GM12878 (cell line): ENCODE measurements at regions of chr12 and their contacts with region 1.

Region 1: DNA sequence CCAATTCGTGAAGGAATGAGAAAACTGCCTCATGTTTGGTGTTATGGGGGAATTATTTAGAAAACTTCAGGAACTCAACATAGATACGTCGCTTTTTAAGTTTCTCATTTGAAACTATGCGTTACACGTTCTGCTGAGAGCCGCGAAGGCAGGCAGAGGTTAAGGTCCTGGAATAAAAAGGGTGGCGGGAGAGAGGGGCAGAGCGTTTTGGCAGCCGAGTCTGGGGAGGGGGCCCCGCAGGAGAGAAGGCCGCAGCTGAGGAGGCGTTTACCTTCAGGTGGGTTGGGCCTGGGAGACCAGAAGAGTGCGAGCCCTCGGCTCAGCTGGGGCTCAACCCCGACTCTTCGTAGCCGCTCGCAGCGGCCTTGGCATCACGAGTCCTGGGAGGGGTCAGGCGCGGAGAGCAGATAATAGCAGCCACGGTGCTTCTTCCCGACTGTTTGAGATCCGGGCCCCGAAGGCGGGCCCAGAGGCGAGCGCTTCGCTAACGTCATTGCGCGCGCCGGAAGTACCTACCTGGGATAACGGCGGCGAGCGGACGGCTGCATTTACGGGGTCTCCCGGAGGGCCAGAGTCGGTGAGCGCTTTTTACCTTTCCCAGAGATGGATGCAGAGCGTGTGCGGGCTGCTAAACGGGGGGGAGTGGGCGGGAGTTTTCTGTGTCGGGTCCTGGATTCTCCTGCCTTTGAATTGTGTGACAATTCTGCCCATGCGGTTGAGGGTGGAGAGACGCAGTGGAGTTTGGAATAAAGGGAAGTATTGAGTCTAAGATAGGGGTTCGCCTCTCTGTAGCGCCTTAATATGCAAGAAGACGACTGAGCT is at the starts of genes PPHLN1 and ZCRB1:
- DNase-seq: no peak
- ATAC-seq: peak; percentile 95
- H3K4me3 ChIP-seq: peak within 1 kb of the TSS; percentile 97
- H3K27ac ChIP-seq: peak within 1 kb of the TSS; percentile 84
- H3K4me1 ChIP-seq: peaks cover 7% of the 10 kb centered on the region
- H3K27me3 ChIP-seq: no peaks in the 10 kb centered on the region
- CTCF ChIP-seq: no peak
- EP300 ChIP-seq: no peak
- POLR2A ChIP-seq: peak; percentile 88
- RAD21 ChIP-seq: no peak
- polyA plus RNA-seq, gene PPHLN1: 117 TPM
- polyA plus RNA-seq, gene ZCRB1: 90.1 to 102 TPM

Region 2: DNA sequence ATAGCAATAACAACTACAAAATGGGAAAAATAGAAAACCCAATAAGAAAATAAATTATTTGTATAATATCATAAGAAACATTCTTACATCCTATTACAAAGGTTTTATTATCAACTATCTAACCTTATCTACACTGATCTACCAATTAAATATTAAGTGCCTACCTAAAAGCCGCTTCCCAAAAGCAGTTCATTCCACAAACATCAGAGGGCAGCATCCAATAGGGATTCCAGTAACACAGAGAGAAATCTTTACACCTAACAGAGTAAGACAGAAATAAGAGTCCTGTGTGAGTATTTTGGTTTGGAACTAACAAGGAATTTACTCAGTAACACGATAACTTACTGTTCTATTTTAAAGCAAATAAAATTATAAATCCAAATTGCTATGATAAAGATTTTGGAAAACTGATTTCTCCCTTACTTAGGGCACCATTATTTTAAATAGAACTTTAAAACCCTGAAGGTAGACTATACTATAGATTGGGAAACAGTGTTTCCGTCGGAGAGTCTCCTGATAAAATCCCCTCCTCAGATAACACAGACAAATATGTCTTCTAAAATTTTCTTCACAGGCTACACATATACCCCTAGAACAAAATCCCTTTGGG is 196.2 kb before region 1 on chr12:
- CTCF ChIA-PET with region 1: interaction called, 8 read pairs
- POLR2A ChIA-PET with region 1: no interaction called
- RAD21 ChIA-PET with region 1: interaction called, 3 read pairs
- SMC1A ChIA-PET with region 1: interaction called, 3 read pairs
- in situ Hi-C with region 1: loop called (anchors 5 kb)
- intact Hi-C with region 1: no loop called
- DNase-seq: no peak
- ATAC-seq: peak; percentile 32; the same call in 2 of the 3 replicates
- H3K4me3 ChIP-seq: no peak overlapping the region
- H3K27ac ChIP-seq: no peak overlapping the region
- H3K4me1 ChIP-seq: no peaks in the 10 kb centered on the region
- H3K27me3 ChIP-seq: no peaks in the 10 kb centered on the region
- CTCF ChIP-seq: peak; percentile 36 to 69 (median 47); a peak in 5 of 6 replicates
- EP300 ChIP-seq: no peak
- POLR2A ChIP-seq: no peak
- RAD21 ChIP-seq: peak; percentile 92

Region 3: GRCh38 chr12:42144408-42145196 is 181.3 kb before region 1 on chr12 and contains the start of gene GXYLT1:
- CTCF ChIA-PET with region 1: no interaction called
- POLR2A ChIA-PET with region 1: interaction called, 8 read pairs
- RAD21 ChIA-PET with region 1: no interaction called
- SMC1A ChIA-PET with region 1: interaction called, 4 read pairs
- in situ Hi-C with region 1: no loop called
- intact Hi-C with region 1: loop called (anchors 5 kb)
- DNase-seq: peak; percentile 79
- ATAC-seq: peak; percentile 94
- H3K4me3 ChIP-seq: peak within 1 kb of the TSS; percentile 82
- H3K27ac ChIP-seq: peak within 1 kb of the TSS; percentile 61
- H3K4me1 ChIP-seq: peaks cover 5% of the 10 kb centered on the region; the same call in 1 of the 2 replicates
- H3K27me3 ChIP-seq: no peaks in the 10 kb centered on the region
- CTCF ChIP-seq: no peak
- EP300 ChIP-seq: no peak; a peak in 1 of 4 replicates
- POLR2A ChIP-seq: peak; percentile 86
- RAD21 ChIP-seq: no peak
- polyA plus RNA-seq, gene GXYLT1: 2.3 to 2.4 TPM

Region 4: GRCh38 chr12:42237052-42237852 is 88.6 kb before region 1 on chr12:
- CTCF ChIA-PET with region 1: interaction called, 12 read pairs
- POLR2A ChIA-PET with region 1: interaction called, 3 read pairs
- RAD21 ChIA-PET with region 1: no interaction called
- SMC1A ChIA-PET with region 1: interaction called, 14 read pairs
- in situ Hi-C with region 1: no loop called
- intact Hi-C with region 1: loop called (anchors 1 kb)
- DNase-seq: peak; percentile 41
- ATAC-seq: peak; percentile 83
- H3K4me3 ChIP-seq: peak overlapping the region; percentile 73
- H3K27ac ChIP-seq: peak overlapping the region; percentile 87
- H3K4me1 ChIP-seq: peaks cover 3% of the 10 kb centered on the region; the same call in 1 of the 2 replicates
- H3K27me3 ChIP-seq: no peaks in the 10 kb centered on the region
- CTCF ChIP-seq: peak; percentile 48 to 63 (median 53)
- EP300 ChIP-seq: no peak
- POLR2A ChIP-seq: peak; percentile 91
- RAD21 ChIP-seq: peak; percentile 30

Region 5: DNA sequence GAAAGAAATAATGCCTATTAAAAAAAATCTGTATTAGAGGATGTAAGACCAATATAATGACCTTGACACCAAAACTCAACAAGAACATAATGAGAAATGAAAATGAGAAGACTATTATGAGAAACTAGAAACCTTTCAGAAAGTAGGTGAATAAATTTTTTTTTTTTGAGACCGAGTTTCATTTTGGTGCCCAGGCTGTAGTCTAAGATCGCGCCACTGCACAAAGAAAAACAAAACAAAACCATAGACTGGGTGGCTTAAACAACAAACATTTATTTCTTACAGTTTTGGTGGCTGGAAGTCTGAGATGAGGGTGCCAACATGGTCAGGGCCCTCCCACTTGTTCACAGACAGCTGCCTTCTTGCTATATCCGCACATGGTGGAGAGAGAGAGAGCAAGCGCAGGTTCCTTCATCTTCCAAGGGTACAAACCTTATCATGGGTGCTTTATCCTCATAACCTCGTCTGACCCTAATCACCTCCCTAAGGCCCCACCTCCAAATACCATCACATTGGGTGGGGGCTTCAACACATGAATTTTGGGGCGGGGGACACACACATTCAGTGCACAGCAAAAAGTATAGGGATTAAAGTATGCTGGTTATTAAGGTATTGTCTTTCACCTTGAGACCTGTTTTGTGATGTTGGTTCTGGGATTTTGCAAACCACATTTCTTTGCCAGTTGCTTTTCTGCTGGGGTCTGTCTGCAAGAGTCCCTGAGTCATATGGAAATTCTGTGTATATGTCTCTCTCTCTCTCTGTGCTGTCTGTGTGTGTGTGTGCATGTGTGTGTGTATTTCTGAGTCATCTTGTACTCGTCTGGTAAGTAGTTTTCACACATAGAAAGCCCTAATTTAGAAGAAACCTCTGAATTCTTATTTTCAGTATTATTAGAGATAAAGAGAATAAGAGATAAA is 26.2 kb before region 1 on chr12:
- CTCF ChIA-PET with region 1: interaction called, 8 read pairs
- POLR2A ChIA-PET with region 1: interaction called, 4 read pairs
- RAD21 ChIA-PET with region 1: interaction called, 9 read pairs
- SMC1A ChIA-PET with region 1: interaction called, 10 read pairs
- in situ Hi-C with region 1: no loop called
- intact Hi-C with region 1: loop called (anchors 1 kb)
- DNase-seq: peak; percentile 97
- ATAC-seq: peak; percentile 88
- H3K4me3 ChIP-seq: peak overlapping the region; percentile 55; the same call in 1 of the 2 replicates
- H3K27ac ChIP-seq: peak overlapping the region; percentile 77
- H3K4me1 ChIP-seq: peaks cover 20% of the 10 kb centered on the region
- H3K27me3 ChIP-seq: no peaks in the 10 kb centered on the region
- CTCF ChIP-seq: no peak
- EP300 ChIP-seq: peak; percentile 96 to 97
- POLR2A ChIP-seq: no peak
- RAD21 ChIP-seq: peak; percentile 25; the same call in 1 of the 2 replicates

Region 6: GRCh38 chr12:42308390-42308789 is 17.5 kb before region 1 on chr12:
- CTCF ChIA-PET with region 1: no interaction called
- POLR2A ChIA-PET with region 1: interaction called, 3 read pairs
- RAD21 ChIA-PET with region 1: no interaction called
- SMC1A ChIA-PET with region 1: no interaction called
- in situ Hi-C with region 1: no loop called
- intact Hi-C with region 1: loop called (anchors 2 kb)
- DNase-seq: no peak
- ATAC-seq: no peak
- H3K4me3 ChIP-seq: no peak overlapping the region
- H3K27ac ChIP-seq: no peak overlapping the region
- H3K4me1 ChIP-seq: no peaks in the 10 kb centered on the region
- H3K27me3 ChIP-seq: no peaks in the 10 kb centered on the region
- CTCF ChIP-seq: no peak
- EP300 ChIP-seq: no peak
- POLR2A ChIP-seq: no peak
- RAD21 ChIP-seq: no peak